Endothelial cell of umbilical vein (primary cell): ENCODE measurements at regions of chr7 and their contacts with region 1.

Region 1: DNA sequence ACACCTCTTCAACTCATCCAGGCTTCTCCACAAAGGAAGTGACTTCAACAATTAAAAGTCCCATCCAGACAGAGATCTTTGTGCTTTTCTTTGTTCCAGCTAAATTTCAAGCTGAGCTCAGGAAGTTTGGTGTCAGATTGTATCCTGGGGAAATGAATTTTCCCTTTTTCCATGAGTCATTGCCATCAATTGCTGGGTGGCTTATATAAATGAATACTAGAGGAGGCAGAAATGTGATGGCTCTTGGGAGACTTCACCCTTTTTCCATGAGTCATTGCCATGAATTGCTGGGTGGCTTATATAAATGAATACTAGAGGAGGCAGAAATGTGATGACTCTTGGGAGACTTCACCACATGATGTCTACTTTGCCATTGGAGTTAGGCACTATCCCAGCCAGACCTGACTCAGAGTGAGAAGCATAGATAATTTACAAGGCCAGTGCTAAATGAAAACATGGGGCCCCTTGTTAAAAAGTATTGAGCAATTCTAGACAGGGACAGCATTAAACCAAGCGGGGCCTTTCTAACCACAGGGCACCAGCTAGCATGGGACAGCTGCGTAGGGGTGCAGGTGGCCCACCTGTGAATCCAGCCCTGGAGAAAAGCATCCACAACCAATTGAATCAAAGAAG is 339.2 kb upstream of the PODXL start:
- DNase-seq: peak; percentile 93
- H3K4me3 ChIP-seq: no peak overlapping the region
- H3K27ac ChIP-seq: peak overlapping the region; percentile 95
- H3K4me1 ChIP-seq: peaks cover 23% of the 10 kb centered on the region
- H3K27me3 ChIP-seq: no peaks in the 10 kb centered on the region
- CTCF ChIP-seq: no peak
- POLR2A ChIP-seq: no peak

Region 2: DNA sequence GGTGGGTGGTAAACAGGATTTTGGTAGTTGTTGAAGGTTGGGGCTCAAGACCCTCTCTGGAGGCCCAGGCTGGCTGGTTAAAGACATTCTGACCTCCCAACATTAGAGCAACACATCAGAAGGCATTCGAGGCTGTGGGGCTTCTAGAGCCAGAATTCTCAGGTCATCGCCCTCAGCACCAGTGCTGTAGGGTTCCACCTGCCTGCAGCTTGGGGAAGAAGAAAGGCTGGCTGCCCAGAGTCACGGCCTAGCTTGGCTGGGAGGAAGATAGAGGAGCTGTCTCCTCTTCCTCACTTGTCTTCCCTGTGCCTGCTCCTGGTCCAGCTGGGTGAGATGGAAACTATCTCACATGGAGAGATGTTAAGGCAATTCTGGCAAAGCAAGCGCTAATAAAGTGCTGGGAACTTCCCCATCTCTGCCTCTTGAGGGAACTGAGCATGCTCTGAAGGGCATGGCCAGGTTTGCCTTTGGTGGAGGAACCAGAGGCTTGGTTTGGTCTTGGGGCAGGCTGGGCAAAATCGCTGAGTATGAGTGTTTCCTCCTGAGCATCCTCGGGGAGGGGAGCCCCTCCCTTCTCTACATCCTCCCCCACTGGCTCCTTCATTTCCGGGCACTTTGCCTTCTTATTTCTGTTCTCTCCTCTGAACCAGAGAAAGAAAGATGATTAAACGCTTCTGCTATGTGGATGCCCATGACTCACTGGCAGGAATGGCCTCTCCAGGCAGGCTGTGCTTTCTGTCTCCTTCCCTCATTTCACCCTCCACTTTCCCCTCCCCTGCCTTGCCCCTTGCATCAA is 169.7 kb after region 1 on chr7:
- CTCF ChIA-PET with region 1: no interaction called
- POLR2A ChIA-PET with region 1: no interaction called
- dilution Hi-C with region 1: no loop called
- intact Hi-C with region 1: loop called (anchors 1 kb)
- DNase-seq: peak; percentile 83
- H3K4me3 ChIP-seq: no peak overlapping the region
- H3K27ac ChIP-seq: peak overlapping the region; percentile 80
- H3K4me1 ChIP-seq: peaks cover 15% of the 10 kb centered on the region
- H3K27me3 ChIP-seq: no peaks in the 10 kb centered on the region
- CTCF ChIP-seq: no peak
- POLR2A ChIP-seq: no peak